Spleen (tissue), 13 donors: ENCODE measurements at regions of chr11 and their contacts with region 1.

Region 1: GRCh38 chr11:63478896-63479295 is 12.1 kb downstream of the PLAAT5 start:
- DNase-seq: no peak
- H3K4me3 ChIP-seq: no peak overlapping the region
- H3K27ac ChIP-seq: no peak overlapping the region
- H3K4me1 ChIP-seq: peaks cover 0 to 9% (median 1%) of the 10 kb centered on the region in 6 donors
- H3K27me3 ChIP-seq: peaks cover 0 to 12% (median 0%) of the 10 kb centered on the region in 7 donors
- CTCF ChIP-seq: peak; percentile 79 to 94 (median 89)
- POLR2A ChIP-seq: no peak

Region 2: GRCh38 chr11:63635762-63636465 is 157.0 kb after region 1 on chr11:
- intact Hi-C with region 1: loop called (anchors 2 kb)
- DNase-seq: no peak
- H3K4me3 ChIP-seq: no peak overlapping the region
- H3K27ac ChIP-seq: no peak overlapping the region
- H3K4me1 ChIP-seq: peaks cover 0 to 15% (median 0%) of the 10 kb centered on the region in 6 donors
- H3K27me3 ChIP-seq: no peaks in the 10 kb centered on the region
- CTCF ChIP-seq: peak; percentile 64 to 88 (median 81)
- POLR2A ChIP-seq: no peak

Region 3: DNA sequence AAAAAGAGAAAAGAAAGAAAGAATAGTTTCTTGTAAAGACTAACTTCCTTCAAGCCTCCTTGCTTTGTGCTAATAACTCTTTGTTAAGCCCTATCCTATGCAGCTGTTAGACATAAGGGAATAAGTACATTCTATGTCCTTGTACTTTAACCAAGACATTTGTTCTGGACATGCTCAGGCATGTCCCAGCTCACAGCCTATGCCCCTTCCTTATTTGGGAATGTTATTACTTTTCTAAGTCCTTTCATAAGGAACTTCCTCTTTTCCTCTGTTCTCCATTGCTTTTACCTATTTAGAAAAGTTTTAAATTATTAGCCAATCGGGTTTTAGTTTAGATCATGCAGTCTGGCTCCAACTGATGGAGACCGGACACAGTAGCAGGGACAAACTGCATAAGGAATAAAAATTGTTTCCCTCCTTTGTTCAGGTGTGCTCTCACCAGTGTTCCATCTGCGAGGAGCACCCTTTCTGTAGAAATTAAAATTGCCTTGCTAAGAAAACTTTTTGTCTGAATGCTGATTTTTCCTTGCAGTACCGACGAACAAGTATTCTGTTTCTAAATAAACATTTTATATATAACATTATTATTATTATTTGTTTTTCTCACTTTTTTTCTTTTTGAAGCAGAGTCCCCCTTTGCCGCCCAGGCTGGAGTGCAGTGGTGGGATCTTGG is 312.7 kb after region 1 on chr11:
- intact Hi-C with region 1: no loop called
- DNase-seq: no peak
- H3K4me3 ChIP-seq: no peak overlapping the region
- H3K27ac ChIP-seq: no peak overlapping the region
- H3K4me1 ChIP-seq: peaks cover 0 to 3% (median 0%) of the 10 kb centered on the region in 6 donors
- H3K27me3 ChIP-seq: no peaks in the 10 kb centered on the region
- CTCF ChIP-seq: no peak
- POLR2A ChIP-seq: no peak